PC-3 (cell line): ENCODE measurements at regions of chr20 and their contacts with region 1.

Region 1: DNA sequence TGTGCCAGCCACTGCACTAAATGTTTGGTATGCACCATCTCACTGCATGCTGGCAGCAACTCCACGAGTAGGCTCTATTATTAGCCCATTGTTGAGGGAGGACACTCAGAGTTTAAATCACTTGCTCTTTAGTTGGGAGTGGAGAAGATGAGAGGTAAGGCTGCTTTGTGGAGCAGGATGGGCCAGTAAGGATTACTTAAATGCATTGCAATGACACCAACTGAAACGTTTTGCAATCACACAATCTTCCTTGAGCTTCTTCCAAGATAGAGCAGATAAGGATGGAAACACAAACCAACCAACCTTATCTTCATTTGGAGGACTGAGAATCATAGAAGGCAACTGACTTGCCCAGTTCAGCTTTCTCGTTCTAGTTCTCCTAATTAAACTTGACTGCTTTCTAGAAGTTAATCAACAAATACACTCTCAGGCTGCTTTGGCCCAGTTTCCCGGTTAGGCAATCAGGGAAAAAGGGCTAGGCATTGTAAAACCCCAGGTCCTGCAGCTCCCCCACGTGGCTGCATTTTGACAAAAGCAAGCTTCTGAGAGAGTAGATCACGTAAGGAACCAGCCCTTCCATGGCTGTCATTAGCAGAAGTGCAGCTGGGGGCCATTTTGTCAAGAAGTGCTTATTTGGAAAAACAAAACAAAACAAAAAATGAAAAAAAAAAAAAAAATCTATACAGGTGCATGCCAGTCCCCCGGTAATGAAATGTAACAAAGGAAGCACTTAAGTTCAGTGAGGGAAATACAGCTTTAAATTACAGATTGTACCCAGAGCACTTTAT is 130.6 kb downstream of the BCAS1 start:
- DNase-seq: peak; percentile 100
- ATAC-seq: peak; percentile 84
- H3K4me3 ChIP-seq: no peak overlapping the region
- H3K27ac ChIP-seq: peak overlapping the region; percentile 70
- H3K4me1 ChIP-seq: peaks cover 43% of the 10 kb centered on the region
- H3K27me3 ChIP-seq: no peaks in the 10 kb centered on the region
- CTCF ChIP-seq: peak; percentile 99

Region 2: DNA sequence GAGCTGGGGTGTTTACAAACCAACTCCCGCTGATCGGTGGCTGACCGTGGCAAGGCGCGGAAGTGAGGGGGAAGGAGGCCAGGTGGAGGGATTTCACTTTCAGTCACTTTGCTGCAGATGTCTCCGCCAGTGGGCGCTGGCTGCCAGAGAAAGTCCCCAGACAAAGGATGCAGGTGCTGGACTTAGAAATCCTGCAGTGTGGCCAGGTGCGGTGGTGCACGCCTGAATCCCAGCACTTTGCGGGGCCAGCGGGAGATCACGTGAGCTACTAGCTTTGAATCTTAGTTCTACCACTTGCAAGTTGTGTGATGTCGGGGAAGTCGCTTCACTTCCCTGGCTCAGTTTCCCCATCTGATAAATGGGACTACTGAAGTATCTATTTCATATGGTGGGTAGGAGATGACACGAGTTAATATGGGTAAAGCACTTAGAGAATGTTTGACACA is 526.6 kb before region 1 on chr20:
- CTCF ChIA-PET with region 1: no interaction called
- POLR2A ChIA-PET with region 1: no interaction called
- intact Hi-C with region 1: loop called (anchors 2 kb)
- DNase-seq: peak; percentile 67
- ATAC-seq: peak; percentile 82
- H3K4me3 ChIP-seq: no peak overlapping the region
- H3K27ac ChIP-seq: no peak overlapping the region
- H3K4me1 ChIP-seq: no peaks in the 10 kb centered on the region
- H3K27me3 ChIP-seq: peaks cover 21% of the 10 kb centered on the region; the same call in 1 of the 2 replicates
- CTCF ChIP-seq: peak; percentile 82

Region 3: GRCh38 chr20:53623454-53624211 is 316.1 kb before region 1 on chr20:
- CTCF ChIA-PET with region 1: no interaction called
- POLR2A ChIA-PET with region 1: interaction called, 5 read pairs
- intact Hi-C with region 1: loop called (anchors 1 kb)
- DNase-seq: peak; percentile 89
- ATAC-seq: peak; percentile 62
- H3K4me3 ChIP-seq: peak overlapping the region; percentile 63
- H3K27ac ChIP-seq: peak overlapping the region; percentile 89
- H3K4me1 ChIP-seq: peaks cover 41% of the 10 kb centered on the region
- H3K27me3 ChIP-seq: no peaks in the 10 kb centered on the region
- CTCF ChIP-seq: peak; percentile 38; the same call in 1 of the 2 replicates

Region 4: DNA sequence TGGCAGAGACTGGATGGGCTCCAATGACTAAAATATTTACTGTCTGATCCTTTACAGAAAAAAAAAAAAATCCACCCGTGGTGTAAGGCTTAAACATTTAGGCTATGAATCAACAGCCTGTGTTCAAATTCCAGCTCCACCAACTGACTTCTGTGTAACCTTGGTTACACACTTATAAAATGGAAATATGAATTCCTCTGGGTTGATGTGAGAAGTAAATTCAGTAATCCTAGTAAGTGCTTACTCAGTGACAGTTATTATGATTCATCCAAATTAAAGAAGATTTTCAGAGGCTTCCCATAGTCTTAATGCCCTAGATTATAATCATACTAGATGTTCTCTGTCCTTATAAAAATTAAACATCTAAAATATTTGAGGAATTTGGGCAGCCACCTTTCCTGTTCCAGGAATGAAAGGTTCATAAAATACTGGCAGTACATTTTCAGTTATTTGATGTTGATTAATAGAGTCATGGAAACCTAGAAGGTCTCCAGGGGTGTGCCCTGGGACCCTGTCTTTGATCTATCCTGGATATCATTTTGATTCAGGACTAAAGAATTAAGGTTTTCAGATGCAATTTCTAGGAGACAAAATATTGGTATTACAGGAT is 165.9 kb before region 1 on chr20:
- CTCF ChIA-PET with region 1: no interaction called
- POLR2A ChIA-PET with region 1: no interaction called
- intact Hi-C with region 1: loop called (anchors 1 kb)
- DNase-seq: peak; percentile 100
- ATAC-seq: peak; percentile 75
- H3K4me3 ChIP-seq: peak overlapping the region; percentile 54
- H3K27ac ChIP-seq: peak overlapping the region; percentile 92
- H3K4me1 ChIP-seq: peaks cover 48% of the 10 kb centered on the region
- H3K27me3 ChIP-seq: no peaks in the 10 kb centered on the region
- CTCF ChIP-seq: no peak

Region 5: GRCh38 chr20:53795170-53795569 is 144.6 kb before region 1 on chr20:
- CTCF ChIA-PET with region 1: no interaction called
- POLR2A ChIA-PET with region 1: no interaction called
- intact Hi-C with region 1: no loop called
- DNase-seq: peak; percentile 49
- ATAC-seq: peak; percentile 35; the same call in 1 of the 2 replicates
- H3K4me3 ChIP-seq: no peak overlapping the region
- H3K27ac ChIP-seq: no peak overlapping the region
- H3K4me1 ChIP-seq: peaks cover 23% of the 10 kb centered on the region
- H3K27me3 ChIP-seq: no peaks in the 10 kb centered on the region
- CTCF ChIP-seq: no peak

Region 6: GRCh38 chr20:53884859-53885541 is 54.8 kb before region 1 on chr20:
- CTCF ChIA-PET with region 1: interaction called, 14 read pairs
- POLR2A ChIA-PET with region 1: no interaction called
- intact Hi-C with region 1: no loop called
- DNase-seq: peak; percentile 92
- ATAC-seq: peak; percentile 68
- H3K4me3 ChIP-seq: no peak overlapping the region
- H3K27ac ChIP-seq: peak overlapping the region; percentile 73
- H3K4me1 ChIP-seq: peaks cover 42% of the 10 kb centered on the region
- H3K27me3 ChIP-seq: no peaks in the 10 kb centered on the region
- CTCF ChIP-seq: 0 out of 2 replicates have a peak, but pooled peaks have one; percentile 20

Region 7: DNA sequence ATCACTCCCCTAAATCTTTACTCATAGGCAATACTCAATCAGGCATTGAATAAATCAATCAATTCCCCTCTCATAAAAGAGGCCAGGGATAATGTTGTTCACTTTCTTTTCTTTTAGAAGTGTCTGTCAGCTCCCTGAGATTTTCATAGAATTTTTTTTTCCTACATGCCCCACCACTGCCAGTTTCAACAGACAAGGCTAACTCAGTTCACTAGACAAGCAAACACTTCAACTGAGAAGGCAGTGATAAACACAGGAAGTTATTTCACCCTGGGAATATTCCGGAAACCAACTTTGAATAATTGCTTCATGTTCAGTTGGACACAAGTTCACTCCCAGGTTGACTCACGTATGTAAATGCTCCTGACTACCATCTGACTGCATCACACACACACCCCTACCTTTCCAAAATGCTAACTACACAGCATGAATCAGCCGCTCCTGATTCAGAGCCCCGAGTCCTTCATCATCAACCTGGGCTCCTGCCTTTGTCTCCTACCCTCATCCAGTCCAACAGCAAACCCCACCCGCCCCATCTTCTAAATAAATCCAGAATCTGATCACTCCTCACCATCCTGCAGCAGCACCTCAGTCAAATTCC is 13.2 kb before region 1 on chr20:
- CTCF ChIA-PET with region 1: interaction called, 5 read pairs
- POLR2A ChIA-PET with region 1: no interaction called
- intact Hi-C with region 1: loop called (anchors 1 kb)
- DNase-seq: peak; percentile 100
- ATAC-seq: peak; percentile 95
- H3K4me3 ChIP-seq: peak overlapping the region; percentile 26; the same call in 1 of the 2 replicates
- H3K27ac ChIP-seq: peak overlapping the region; percentile 88
- H3K4me1 ChIP-seq: peaks cover 46% of the 10 kb centered on the region
- H3K27me3 ChIP-seq: no peaks in the 10 kb centered on the region
- CTCF ChIP-seq: no peak

Region 8: DNA sequence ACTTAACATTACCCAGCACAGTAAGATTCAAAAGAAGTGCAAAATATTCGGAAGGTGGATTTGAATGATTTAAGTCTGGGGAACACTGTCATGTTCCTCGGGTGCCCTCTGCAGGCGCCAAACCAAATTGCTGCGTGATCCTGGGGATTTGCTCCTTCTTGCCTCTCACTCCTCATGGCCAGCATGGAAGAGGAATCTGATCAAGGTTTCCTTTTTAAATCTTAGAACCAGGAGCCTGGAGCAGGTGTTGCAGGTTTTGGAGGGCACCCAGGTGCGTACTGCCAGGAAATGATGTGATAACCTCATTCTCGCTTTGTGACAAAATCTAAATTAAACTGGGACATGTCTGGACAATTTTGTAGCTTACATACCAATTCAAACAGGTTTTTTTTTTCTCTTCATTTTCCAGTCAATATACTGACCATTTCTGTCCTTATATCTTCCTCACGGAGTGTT is 260.0 kb after region 1 on chr20:
- CTCF ChIA-PET with region 1: no interaction called
- POLR2A ChIA-PET with region 1: no interaction called
- intact Hi-C with region 1: loop called (anchors 5 kb)
- DNase-seq: peak; percentile 95
- ATAC-seq: peak; percentile 61
- H3K4me3 ChIP-seq: no peak overlapping the region
- H3K27ac ChIP-seq: no peak overlapping the region
- H3K4me1 ChIP-seq: peaks cover 18% of the 10 kb centered on the region
- H3K27me3 ChIP-seq: no peaks in the 10 kb centered on the region
- CTCF ChIP-seq: peak; percentile 99